Activated CD4-positive, alpha-beta T cell treated with anti-CD3 and anti-CD28 coated beads, Interleukin-2, amount 10 ng/mL, durations not matched to agents 24 days and 14 days (primary cell): ENCODE measurements at regions of chrX and their contacts with region 1.

Region 1: DNA sequence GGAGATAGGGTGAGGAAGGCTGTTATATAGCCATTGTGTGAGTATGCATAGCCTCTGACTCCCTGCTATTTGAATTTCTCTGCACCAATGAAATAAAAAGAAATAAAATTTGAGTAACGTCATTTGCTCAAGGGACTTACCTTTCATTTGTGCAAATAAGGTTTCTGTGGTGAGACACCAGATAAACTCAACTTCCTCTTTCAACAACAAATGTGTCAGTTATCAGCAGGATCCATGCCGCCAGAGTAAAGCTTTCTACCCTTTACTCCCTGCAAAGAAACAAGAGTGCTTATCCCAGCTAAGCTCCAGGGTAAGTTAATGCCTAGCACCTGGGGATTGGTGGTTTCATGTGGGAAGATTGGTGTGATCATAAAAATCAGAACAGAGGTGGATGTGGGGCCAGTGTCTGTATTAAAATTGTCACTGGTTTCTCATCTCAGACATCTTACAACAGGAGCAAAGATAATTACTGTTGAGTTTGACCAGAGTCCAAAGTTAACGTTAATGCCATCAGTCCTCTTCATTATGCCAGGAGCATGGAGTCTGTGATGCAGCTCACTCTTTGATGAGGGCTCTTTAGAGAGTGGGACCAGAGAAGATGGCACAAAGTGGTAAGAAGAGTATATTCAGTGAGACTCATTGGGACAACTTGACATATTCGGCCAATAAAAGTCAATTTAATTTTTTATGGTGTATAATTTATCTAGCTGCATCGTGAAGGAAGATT is at the start of gene P2RY10:
- DNase-seq: peak; percentile 78
- H3K4me3 Mint-ChIP-seq: peak within 1 kb of the TSS; percentile 98
- H3K27ac Mint-ChIP-seq: peak within 1 kb of the TSS; percentile 98
- H3K4me1 Mint-ChIP-seq: peaks cover 34% of the 10 kb centered on the region
- H3K27me3 Mint-ChIP-seq: no peaks in the 10 kb centered on the region
- total RNA-seq, gene P2RY10: 34.1 and 38.8 TPM in 2 replicates

Region 2: GRCh38 chrX:78333521-78333920 is 611.8 kb before region 1 on chrX:
- intact Hi-C with region 1: loop called (anchors 5 kb)
- DNase-seq: peak; percentile 79
- H3K4me3 Mint-ChIP-seq: peak overlapping the region; percentile 44
- H3K27ac Mint-ChIP-seq: peak overlapping the region; percentile 91
- H3K4me1 Mint-ChIP-seq: peaks cover 48% of the 10 kb centered on the region
- H3K27me3 Mint-ChIP-seq: no peaks in the 10 kb centered on the region

Region 3: DNA sequence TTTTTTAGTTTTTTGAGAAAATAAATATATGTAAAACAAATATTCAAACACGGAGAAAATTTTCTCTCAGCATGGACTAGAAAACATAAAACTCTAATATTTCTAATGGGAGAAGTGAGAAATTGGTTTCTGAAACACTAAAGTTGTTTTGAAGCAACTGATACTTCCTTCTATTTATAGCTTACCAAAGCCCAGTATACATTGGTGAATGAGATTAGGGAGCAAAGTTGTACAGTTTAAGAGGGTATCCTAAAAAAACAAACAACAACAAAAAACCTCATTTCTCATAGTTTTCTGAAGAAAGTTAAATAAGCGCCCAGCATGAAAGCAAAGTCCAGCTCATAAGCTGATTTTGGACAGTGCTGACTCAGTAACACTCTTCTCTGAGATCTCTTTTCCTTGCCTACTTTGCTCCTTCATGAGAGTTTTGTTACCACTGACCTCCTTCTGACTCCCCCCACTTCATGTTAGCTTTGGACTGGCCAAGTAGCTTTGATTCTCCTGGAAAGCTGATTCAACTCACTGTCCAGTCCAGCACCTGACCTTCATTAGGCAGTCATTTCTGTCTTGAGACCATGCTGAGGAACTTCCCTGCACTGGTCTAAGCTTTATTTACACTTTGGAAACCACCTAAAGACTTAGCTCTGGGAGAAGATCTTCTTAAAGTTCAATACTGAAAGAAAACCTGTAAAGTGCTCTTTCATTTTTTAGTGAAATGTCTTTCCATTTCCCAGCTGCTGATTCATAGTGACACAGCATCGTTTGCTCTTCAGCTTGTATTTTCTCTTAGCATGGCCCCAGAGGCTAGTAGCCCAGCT is 21.9 kb before region 1 on chrX:
- intact Hi-C with region 1: loop called (anchors 1 kb)
- DNase-seq: peak; percentile 56
- H3K4me3 Mint-ChIP-seq: peak overlapping the region; percentile 79
- H3K27ac Mint-ChIP-seq: peak overlapping the region; percentile 97
- H3K4me1 Mint-ChIP-seq: peaks cover 9% of the 10 kb centered on the region
- H3K27me3 Mint-ChIP-seq: no peaks in the 10 kb centered on the region

Region 4: DNA sequence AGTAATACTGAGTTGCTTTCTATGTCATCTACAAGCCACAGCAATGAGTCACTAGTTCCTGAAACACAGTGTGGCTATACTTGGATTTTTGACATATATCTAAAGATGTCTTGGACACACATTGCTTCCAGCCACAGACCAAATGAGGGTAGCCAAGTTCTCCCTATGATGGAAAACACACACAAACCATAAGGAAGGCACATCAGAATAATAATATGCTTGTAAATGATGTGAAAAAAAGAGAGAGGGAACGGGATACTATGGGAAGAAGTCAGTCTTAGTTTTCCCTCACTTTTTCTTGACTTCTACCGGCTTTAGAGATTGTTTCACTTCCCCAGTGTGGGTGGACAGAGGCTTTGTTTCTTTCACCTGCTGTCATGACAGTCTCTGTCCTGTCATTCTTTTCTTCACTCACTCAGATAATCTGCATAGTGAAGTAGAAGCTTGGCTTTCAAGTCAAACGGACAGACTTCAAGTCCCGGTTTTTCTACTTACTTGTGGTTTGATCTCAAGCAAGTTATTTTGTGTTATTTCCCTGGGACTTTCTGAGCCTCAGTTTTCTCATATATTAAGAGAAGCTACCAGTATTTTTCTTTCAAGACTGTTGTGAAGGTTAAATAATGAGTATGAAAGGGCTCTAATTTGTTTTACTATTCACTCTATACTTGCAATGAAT is 34.6 kb after region 1 on chrX:
- intact Hi-C with region 1: loop called (anchors 1 kb)
- DNase-seq: peak; percentile 58
- H3K4me3 Mint-ChIP-seq: peak overlapping the region; percentile 79
- H3K27ac Mint-ChIP-seq: peak overlapping the region; percentile 100
- H3K4me1 Mint-ChIP-seq: peaks cover 19% of the 10 kb centered on the region
- H3K27me3 Mint-ChIP-seq: no peaks in the 10 kb centered on the region

Region 5: DNA sequence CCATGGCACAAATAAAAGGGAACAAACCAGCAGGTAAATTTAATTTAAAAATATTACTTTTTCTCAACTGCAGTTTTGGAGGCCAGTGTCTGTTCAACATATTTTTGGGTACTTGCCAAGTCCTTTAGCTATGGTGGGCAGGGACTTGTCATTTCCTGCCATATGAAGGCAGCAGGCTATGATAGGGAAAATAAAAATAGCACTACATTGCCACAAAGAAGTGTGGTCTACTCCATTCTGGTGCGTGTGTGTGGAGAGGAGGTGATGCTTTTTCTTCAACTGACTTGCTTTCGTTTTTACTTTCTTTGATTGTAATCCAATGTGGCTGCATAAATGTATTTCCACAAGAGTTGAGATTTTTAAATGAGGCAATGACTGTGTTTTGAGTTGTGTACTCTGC is 216.3 kb after region 1 on chrX:
- intact Hi-C with region 1: loop called (anchors 5 kb)
- DNase-seq: peak; percentile 85
- H3K4me3 Mint-ChIP-seq: peak overlapping the region; percentile 82
- H3K27ac Mint-ChIP-seq: peak overlapping the region; percentile 98
- H3K4me1 Mint-ChIP-seq: peaks cover 40% of the 10 kb centered on the region
- H3K27me3 Mint-ChIP-seq: no peaks in the 10 kb centered on the region

Region 6: GRCh38 chrX:79366873-79367749 is 421.8 kb after region 1 on chrX and contains the start of gene ITM2A:
- intact Hi-C with region 1: loop called (anchors 2 kb)
- DNase-seq: peak; percentile 86
- H3K4me3 Mint-ChIP-seq: peak within 1 kb of the TSS; percentile 99
- H3K27ac Mint-ChIP-seq: peak within 1 kb of the TSS; percentile 99
- H3K4me1 Mint-ChIP-seq: peaks cover 30% of the 10 kb centered on the region
- H3K27me3 Mint-ChIP-seq: no peaks in the 10 kb centered on the region
- total RNA-seq, gene ITM2A: 102 and 113 TPM in 2 replicates